Heart right ventricle (tissue), 16 donors: ENCODE measurements at regions of chr15 and their contacts with region 1.

Region 1: GRCh38 chr15:58742022-58742813 is 7.3 kb downstream of the ADAM10 start:
- DNase-seq: no peak
- ATAC-seq: peak in 6 of 8 donors; percentile 38 to 82 (median 74)
- H3K4me3 ChIP-seq: no peak overlapping the region
- H3K27ac ChIP-seq: peak overlapping the region in 9 of 10 donors; percentile 32 to 81 (median 65)
- H3K4me1 ChIP-seq: peaks cover 0 to 100% (median 78%) of the 10 kb centered on the region in 9 donors
- H3K27me3 ChIP-seq: no peaks in the 10 kb centered on the region
- CTCF ChIP-seq: no peak

Region 2: DNA sequence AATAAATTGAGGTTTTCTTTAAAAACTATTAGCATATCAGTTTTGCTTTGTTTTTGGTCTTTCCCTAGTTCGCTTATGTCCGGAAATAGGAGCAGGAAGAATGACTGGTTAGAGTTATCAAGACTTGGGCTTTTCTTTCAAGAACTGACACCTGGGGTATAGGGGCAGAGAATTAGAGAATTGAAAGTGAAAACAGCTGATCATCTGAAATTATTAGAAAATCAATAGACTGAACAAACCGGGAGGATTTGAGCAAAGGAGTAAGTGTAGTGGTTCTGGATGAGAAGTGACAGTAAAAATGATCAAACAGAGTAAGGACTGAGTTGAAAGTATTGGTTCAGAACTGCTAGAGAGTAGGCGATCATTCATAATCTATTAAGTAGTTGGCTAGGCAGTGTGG is 34.9 kb after region 1 on chr15:
- intact Hi-C with region 1: loop called in 1 of 10 experiments (anchors 5 kb)
- DNase-seq: no peak
- ATAC-seq: no peak
- H3K4me3 ChIP-seq: no peak overlapping the region
- H3K27ac ChIP-seq: peak overlapping the region in 2 of 10 donors; percentile 5 to 13
- H3K4me1 ChIP-seq: peaks cover 2 to 92% (median 51%) of the 10 kb centered on the region in 9 donors
- H3K27me3 ChIP-seq: no peaks in the 10 kb centered on the region
- CTCF ChIP-seq: no peak